Esophagus muscularis mucosa (tissue), 4 donors: ENCODE measurements at regions of chr13 and their contacts with region 1.

Region 1: GRCh38 chr13:111046590-111047141 is 68.4 kb upstream of the ARHGEF7 start:
- DNase-seq: peak; percentile 90
- H3K4me3 ChIP-seq: no peak overlapping the region
- H3K27ac ChIP-seq: no peak overlapping the region
- H3K4me1 ChIP-seq: peaks cover 6 to 14% (median 10%) of the 10 kb centered on the region in 4 donors
- H3K27me3 ChIP-seq: peaks cover 0 to 6% (median 0%) of the 10 kb centered on the region in 4 donors
- CTCF ChIP-seq: peak in 1 of 3 experiments; percentile 8
- EP300 ChIP-seq: no peak
- POLR2A ChIP-seq: no peak

Region 2: GRCh38 chr13:110771194-110771593 is 275.5 kb before region 1 on chr13:
- intact Hi-C with region 1: no loop called
- DNase-seq: no peak
- H3K4me3 ChIP-seq: no peak overlapping the region
- H3K27ac ChIP-seq: no peak overlapping the region
- H3K4me1 ChIP-seq: no peaks in the 10 kb centered on the region
- H3K27me3 ChIP-seq: peaks cover 0 to 9% (median 0%) of the 10 kb centered on the region in 4 donors
- CTCF ChIP-seq: no peak
- EP300 ChIP-seq: no peak
- POLR2A ChIP-seq: no peak

Region 3: GRCh38 chr13:110826861-110827672 is 219.6 kb before region 1 on chr13:
- intact Hi-C with region 1: no loop called
- DNase-seq: peak; percentile 14
- H3K4me3 ChIP-seq: no peak overlapping the region
- H3K27ac ChIP-seq: no peak overlapping the region
- H3K4me1 ChIP-seq: no peaks in the 10 kb centered on the region
- H3K27me3 ChIP-seq: peaks cover 0 to 19% (median 0%) of the 10 kb centered on the region in 4 donors
- CTCF ChIP-seq: no peak
- EP300 ChIP-seq: no peak
- POLR2A ChIP-seq: no peak

Region 4: DNA sequence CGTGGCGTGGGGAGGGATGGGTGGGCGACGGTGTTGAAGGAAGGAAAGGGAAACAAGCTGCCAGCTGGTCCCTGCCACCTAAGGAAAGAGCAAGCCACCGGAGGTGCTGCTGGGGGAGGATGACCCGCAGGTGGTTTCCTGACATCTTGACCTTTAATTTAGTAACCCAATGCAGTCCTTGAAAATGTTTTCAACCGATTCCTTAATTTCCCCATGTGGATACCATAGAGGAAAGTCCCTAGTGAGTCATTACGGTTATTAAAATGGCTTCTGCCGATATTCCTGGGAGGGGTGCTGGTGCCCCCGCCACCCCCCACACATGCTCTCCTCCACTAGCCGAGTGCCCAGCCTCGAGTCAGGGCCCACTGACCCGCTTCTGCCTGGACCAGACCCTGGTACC is 125.5 kb before region 1 on chr13:
- intact Hi-C with region 1: loop called (anchors 5 kb)
- DNase-seq: no peak
- H3K4me3 ChIP-seq: no peak overlapping the region
- H3K27ac ChIP-seq: no peak overlapping the region
- H3K4me1 ChIP-seq: peaks cover 8 to 15% (median 12%) of the 10 kb centered on the region in 4 donors
- H3K27me3 ChIP-seq: peaks cover 0 to 19% (median 0%) of the 10 kb centered on the region in 4 donors
- CTCF ChIP-seq: no peak
- EP300 ChIP-seq: no peak
- POLR2A ChIP-seq: no peak

Region 5: DNA sequence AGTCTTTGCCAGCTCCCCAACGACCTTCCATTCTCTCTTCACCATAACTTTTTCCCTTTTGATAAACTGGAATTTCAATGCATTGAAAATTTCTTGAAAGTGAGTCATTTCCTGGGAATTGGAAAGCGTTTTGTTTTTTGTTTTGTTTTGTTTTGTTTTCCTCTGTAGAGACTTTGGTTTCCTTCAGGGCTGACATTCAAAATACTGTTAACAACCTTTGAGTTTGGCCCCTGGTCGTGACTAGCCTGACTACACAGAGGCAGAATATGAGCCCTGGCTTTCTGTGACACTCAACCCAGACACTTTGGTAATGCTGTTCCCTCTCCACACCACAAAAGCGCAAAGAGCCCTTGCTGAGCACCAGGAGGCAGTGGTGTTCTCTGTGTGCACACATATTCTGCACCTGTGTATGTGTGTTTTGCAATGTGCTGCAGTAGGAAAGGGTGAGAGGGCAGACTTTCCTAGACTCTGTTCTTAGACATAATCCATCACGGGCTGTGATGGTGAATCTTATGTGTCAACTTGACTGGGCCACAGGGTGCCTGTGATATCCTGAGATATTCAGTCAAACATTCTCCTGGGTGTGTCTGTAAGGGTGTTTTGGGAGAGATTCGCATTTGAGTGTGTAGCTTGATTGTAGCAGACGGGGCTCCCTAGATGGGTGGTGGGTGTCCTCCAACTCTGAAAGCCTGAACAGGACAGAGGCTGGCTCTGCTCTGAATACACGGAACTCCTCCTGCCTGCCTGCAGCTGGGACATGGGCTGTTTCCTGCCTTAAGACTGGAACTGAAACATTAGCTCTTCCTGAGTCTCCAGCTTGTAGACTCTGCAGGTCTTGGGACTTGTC is 102.3 kb before region 1 on chr13:
- intact Hi-C with region 1: loop called (anchors 5 kb)
- DNase-seq: no peak
- H3K4me3 ChIP-seq: no peak overlapping the region
- H3K27ac ChIP-seq: no peak overlapping the region
- H3K4me1 ChIP-seq: peaks cover 0 to 6% (median 2%) of the 10 kb centered on the region in 4 donors
- H3K27me3 ChIP-seq: no peaks in the 10 kb centered on the region
- CTCF ChIP-seq: peak; percentile 35 to 45 (median 39)
- EP300 ChIP-seq: no peak
- POLR2A ChIP-seq: no peak

Region 6: GRCh38 chr13:111006506-111007031 is 40.1 kb before region 1 on chr13:
- intact Hi-C with region 1: loop called (anchors 5 kb)
- DNase-seq: no peak
- H3K4me3 ChIP-seq: peak overlapping the region; percentile 4 to 37 (median 14)
- H3K27ac ChIP-seq: peak overlapping the region; percentile 75 to 89 (median 84)
- H3K4me1 ChIP-seq: peaks cover 22 to 26% (median 25%) of the 10 kb centered on the region in 4 donors
- H3K27me3 ChIP-seq: no peaks in the 10 kb centered on the region
- CTCF ChIP-seq: no peak
- EP300 ChIP-seq: no peak
- POLR2A ChIP-seq: no peak

Region 7: GRCh38 chr13:111559612-111560403 is 513.1 kb after region 1 on chr13:
- intact Hi-C with region 1: no loop called
- DNase-seq: no peak
- H3K4me3 ChIP-seq: no peak overlapping the region
- H3K27ac ChIP-seq: no peak overlapping the region
- H3K4me1 ChIP-seq: no peaks in the 10 kb centered on the region
- H3K27me3 ChIP-seq: peaks cover 0 to 46% (median 0%) of the 10 kb centered on the region in 4 donors
- CTCF ChIP-seq: no peak
- EP300 ChIP-seq: no peak
- POLR2A ChIP-seq: no peak